ENCODE measurements at regions of chr11 and their contacts with region 1.

Region 1: DNA sequence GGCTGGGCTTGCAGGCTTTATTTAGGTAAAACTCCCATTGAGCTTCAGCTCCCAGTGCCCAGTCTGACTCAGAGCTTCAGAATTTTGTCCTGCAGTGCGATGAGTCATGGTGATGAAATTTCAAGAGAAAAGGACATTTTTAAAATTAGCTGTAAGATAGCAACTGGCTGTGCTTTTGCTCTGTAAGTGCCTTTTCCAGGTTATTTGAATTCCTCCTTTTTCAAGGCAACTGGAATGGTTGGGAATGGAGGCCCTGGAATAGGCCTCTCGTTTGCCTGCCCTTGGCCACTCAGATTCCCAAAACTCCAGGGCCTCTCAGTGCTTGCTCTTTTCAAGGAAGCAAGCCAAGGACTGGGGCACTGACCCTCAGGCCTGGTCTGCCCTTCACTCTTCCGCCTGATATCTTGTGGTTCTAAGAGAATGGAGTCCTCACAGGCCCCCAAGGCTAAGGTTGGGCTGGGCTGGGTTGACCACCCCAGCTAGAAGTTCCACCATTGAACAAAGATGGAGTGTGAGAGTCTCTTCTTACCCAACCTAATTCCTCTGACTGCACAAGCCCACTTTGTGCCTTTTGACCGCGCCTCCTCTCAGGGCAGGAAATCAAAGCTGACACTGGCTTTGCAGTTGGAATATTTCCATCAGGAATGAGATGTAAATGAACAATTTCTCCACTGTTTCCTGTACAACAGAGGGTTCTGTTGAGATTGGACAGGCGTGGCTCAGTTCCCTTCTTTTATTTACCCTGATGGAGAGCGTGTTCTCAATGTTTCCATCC is 59.4 kb upstream of the PRSS23 start:
- DNase-seq: no peak

Region 2: GRCh38 chr11:86537541-86538222 is 203.2 kb before region 1 on chr11:
- intact Hi-C with region 1: no loop called
- DNase-seq: no peak

Region 3: GRCh38 chr11:86632499-86633269 is 108.2 kb before region 1 on chr11:
- intact Hi-C with region 1: loop called (anchors 5 kb)
- DNase-seq: no peak

Region 4: DNA sequence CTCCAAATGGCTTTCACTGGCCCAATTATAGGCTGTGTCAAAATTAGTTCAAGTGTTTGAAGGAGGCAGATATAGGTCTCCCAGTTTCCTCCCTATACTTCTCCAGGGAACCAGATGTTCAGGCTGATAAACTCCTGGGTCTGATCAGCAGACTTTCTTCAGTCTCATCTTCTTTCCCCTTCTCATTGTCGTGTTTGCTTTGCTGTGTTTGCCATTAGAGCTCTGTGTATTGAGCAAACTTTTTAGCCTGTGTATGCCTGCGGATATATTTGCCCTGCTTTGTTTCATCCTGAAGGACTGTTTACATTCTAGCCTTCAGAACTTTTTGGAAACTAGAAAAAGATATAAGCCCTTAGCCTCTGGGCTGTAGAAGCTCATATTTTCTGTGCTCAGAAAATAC is 34.6 kb before region 1 on chr11:
- intact Hi-C with region 1: no loop called
- DNase-seq: no peak

Region 5: DNA sequence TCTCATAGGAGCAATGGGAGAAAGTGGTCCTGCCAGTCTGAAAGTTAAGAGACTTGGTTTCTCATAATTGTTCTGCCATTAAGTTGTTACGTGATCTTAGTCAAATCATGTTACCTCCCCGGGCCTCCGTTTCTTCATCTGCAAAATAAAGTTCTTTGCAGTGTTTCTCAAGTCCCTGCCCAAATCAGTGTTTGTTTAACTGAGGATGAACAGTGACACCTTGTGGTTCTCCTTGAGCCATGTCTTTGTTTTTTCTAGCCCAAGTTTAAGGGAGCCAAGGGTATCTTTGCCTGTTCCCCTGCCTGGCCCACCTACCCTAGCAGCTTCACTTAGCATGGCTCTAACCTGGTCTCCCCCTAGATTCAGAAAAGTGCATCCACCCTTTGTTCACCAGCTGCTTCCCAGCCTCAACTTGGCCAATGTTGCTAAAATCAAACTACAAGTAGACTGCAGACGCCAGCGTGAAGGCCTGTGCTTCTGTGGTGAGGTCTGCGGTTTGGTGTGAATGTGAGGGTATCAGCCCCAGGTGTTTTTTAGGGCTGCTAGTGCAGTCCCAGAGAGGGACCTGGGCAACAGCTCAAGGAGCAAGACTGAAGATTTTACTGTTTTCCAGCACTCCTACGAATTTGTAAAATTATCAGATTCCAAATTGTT is 178.8 kb after region 1 on chr11:
- intact Hi-C with region 1: loop called (anchors 5 kb)
- DNase-seq: no peak

Measured in cardiac septum (tissue), 1 donor.